ENCODE measurements at regions of chr9 and their contacts with region 1.

Region 1: GRCh38 chr9:76704593-76705204 is 59.5 kb upstream of the PCA3 start:
- DNase-seq: no peak
- ATAC-seq: no peak
- H3K4me3 Mint-ChIP-seq: no peak overlapping the region
- H3K27ac Mint-ChIP-seq: no peak overlapping the region
- H3K4me1 Mint-ChIP-seq: no peaks in the 10 kb centered on the region
- H3K27me3 Mint-ChIP-seq: peaks cover 24% of the 10 kb centered on the region

Region 2: GRCh38 chr9:75265525-75265972 is 1439.2 kb before region 1 on chr9:
- CTCF ChIA-PET with region 1: no interaction called
- POLR2A ChIA-PET with region 1: no interaction called
- intact Hi-C with region 1: loop called in 1 of 2 experiments (anchors 5 kb)
- DNase-seq: peak; percentile 69
- ATAC-seq: peak; percentile 60
- H3K4me3 Mint-ChIP-seq: no peak overlapping the region
- H3K27ac Mint-ChIP-seq: no peak overlapping the region
- H3K4me1 Mint-ChIP-seq: no peaks in the 10 kb centered on the region
- H3K27me3 Mint-ChIP-seq: no peaks in the 10 kb centered on the region

Region 3: GRCh38 chr9:76403352-76403751 is 301.3 kb before region 1 on chr9:
- CTCF ChIA-PET with region 1: interaction called, 4 read pairs
- POLR2A ChIA-PET with region 1: no interaction called
- intact Hi-C with region 1: loop called (anchors 1 kb)
- DNase-seq: peak; percentile 30
- ATAC-seq: peak; percentile 94
- H3K4me3 Mint-ChIP-seq: peak overlapping the region; percentile 16
- H3K27ac Mint-ChIP-seq: peak overlapping the region; percentile 62
- H3K4me1 Mint-ChIP-seq: peaks cover 11% of the 10 kb centered on the region
- H3K27me3 Mint-ChIP-seq: no peaks in the 10 kb centered on the region

Region 4: DNA sequence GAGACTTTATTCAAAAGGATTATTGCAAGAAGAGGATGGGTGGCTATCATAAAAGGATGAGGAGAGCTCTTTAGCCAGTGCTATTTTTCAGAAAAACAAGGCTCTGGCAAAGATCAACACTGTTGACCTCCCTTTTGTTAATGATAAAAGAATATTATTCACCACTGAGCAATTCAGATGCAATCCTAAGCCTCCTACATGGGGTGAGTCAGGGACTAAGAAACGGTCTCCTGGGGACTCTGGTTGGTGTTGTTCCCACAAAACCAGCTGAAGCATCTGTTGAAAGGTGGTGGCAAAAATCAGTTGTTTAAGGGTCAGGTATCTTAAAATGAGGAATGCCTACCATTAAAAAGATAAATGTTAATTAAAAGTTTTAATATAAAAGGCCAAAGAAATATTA is 253.5 kb before region 1 on chr9:
- CTCF ChIA-PET with region 1: interaction called, 11 read pairs
- POLR2A ChIA-PET with region 1: no interaction called
- intact Hi-C with region 1: loop called (anchors 1 kb)
- DNase-seq: no peak
- ATAC-seq: no peak
- H3K4me3 Mint-ChIP-seq: no peak overlapping the region
- H3K27ac Mint-ChIP-seq: no peak overlapping the region
- H3K4me1 Mint-ChIP-seq: peaks cover 7% of the 10 kb centered on the region
- H3K27me3 Mint-ChIP-seq: no peaks in the 10 kb centered on the region

Region 5: GRCh38 chr9:76643399-76644117 is 61.1 kb before region 1 on chr9:
- CTCF ChIA-PET with region 1: no interaction called
- POLR2A ChIA-PET with region 1: no interaction called
- intact Hi-C with region 1: no loop called
- DNase-seq: no peak
- ATAC-seq: no peak
- H3K4me3 Mint-ChIP-seq: no peak overlapping the region
- H3K27ac Mint-ChIP-seq: no peak overlapping the region
- H3K4me1 Mint-ChIP-seq: no peaks in the 10 kb centered on the region
- H3K27me3 Mint-ChIP-seq: no peaks in the 10 kb centered on the region

Region 6: GRCh38 chr9:76667521-76667957 is 37.2 kb before region 1 on chr9:
- CTCF ChIA-PET with region 1: interaction called, 6 read pairs
- POLR2A ChIA-PET with region 1: no interaction called
- intact Hi-C with region 1: loop called (anchors 2 to 5 kb)
- DNase-seq: no peak
- ATAC-seq: no peak
- H3K4me3 Mint-ChIP-seq: no peak overlapping the region
- H3K27ac Mint-ChIP-seq: no peak overlapping the region
- H3K4me1 Mint-ChIP-seq: peaks cover 2% of the 10 kb centered on the region
- H3K27me3 Mint-ChIP-seq: no peaks in the 10 kb centered on the region